T-cell (primary cell): ENCODE measurements at regions of chr2 and their contacts with region 1.

Region 1: GRCh38 chr2:113694438-113694837 is 62.0 kb downstream of the SLC35F5 start:
- DNase-seq: no peak
- ATAC-seq: no peak
- H3K4me3 ChIP-seq: no peak overlapping the region
- H3K4me3 Mint-ChIP-seq: peak overlapping the region in 1 of 3 donors; percentile 75
- H3K27ac ChIP-seq: no peak overlapping the region
- H3K27ac Mint-ChIP-seq: no peak overlapping the region
- H3K4me1 ChIP-seq: peaks cover 5 to 20% of the 10 kb centered on the region in 2 experiments
- H3K4me1 Mint-ChIP-seq: peaks cover 27 to 40% (median 30%) of the 10 kb centered on the region in 3 donors
- H3K27me3 ChIP-seq: no peaks in the 10 kb centered on the region
- H3K27me3 Mint-ChIP-seq: no peaks in the 10 kb centered on the region

Region 2: DNA sequence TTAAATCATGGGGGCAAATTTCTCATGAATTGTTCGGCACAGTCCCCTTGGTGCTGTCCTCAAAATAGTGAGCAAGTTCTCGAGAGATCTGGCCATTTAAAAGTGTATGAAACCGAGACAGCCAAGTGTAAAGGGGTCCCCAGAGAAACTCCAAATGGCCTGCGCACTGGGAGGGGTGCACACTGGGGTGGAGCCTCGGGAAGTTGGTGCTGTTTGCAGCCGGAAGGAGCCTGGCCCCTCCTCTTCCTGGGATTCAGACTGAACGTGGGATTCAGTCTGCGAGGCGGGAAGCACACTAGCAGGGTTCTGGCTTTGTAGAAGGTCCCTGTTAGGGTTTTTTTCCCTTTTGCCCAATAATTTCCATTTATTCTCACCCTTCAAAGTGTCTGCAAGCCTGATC is 18.6 kb before region 1 on chr2:
- CTCF ChIA-PET with region 1: no interaction called
- POLR2A ChIA-PET with region 1: interaction called in 1 of 2 experiments, 14 read pairs
- DNase-seq: no peak
- ATAC-seq: no peak
- H3K4me3 ChIP-seq: no peak overlapping the region
- H3K4me3 Mint-ChIP-seq: no peak overlapping the region
- H3K27ac ChIP-seq: no peak overlapping the region
- H3K27ac Mint-ChIP-seq: no peak overlapping the region
- H3K4me1 ChIP-seq: peaks cover 0 to 4% of the 10 kb centered on the region in 2 experiments
- H3K4me1 Mint-ChIP-seq: peaks cover 0 to 5% (median 0%) of the 10 kb centered on the region in 3 donors
- H3K27me3 ChIP-seq: no peaks in the 10 kb centered on the region
- H3K27me3 Mint-ChIP-seq: peaks cover 0 to 3% of the 10 kb centered on the region in 2 donors

Region 3: DNA sequence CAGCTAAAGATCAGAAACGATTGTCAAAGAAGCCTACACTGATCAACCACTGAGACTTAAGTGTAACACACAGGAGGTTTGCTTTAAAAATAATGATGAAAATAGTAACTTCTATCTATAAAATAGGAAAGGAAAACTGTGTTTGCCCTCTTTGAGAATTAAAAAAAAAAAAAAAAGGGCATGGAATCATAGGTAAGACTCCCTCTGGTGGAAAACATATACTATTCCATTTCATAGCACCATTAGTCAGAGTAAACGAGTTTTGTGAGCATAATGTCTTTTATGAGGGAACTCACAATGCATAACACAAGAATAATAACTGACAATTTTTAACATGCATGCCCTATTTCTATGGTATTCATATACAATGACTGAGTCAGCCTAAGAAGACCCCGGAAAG is 25.7 kb after region 1 on chr2:
- CTCF ChIA-PET with region 1: no interaction called
- POLR2A ChIA-PET with region 1: no interaction called
- DNase-seq: peak in 1 of 35 experiments; percentile 13
- ATAC-seq: no peak
- H3K4me3 ChIP-seq: no peak overlapping the region
- H3K4me3 Mint-ChIP-seq: no peak overlapping the region
- H3K27ac ChIP-seq: no peak overlapping the region
- H3K27ac Mint-ChIP-seq: no peak overlapping the region
- H3K4me1 ChIP-seq: no peaks in the 10 kb centered on the region
- H3K4me1 Mint-ChIP-seq: peaks cover 0 to 2% (median 0%) of the 10 kb centered on the region in 3 donors
- H3K27me3 ChIP-seq: no peaks in the 10 kb centered on the region
- H3K27me3 Mint-ChIP-seq: no peaks in the 10 kb centered on the region

Region 4: GRCh38 chr2:113757138-113757657 is 62.8 kb after region 1 on chr2:
- CTCF ChIA-PET with region 1: no interaction called
- POLR2A ChIA-PET with region 1: no interaction called
- DNase-seq: peak in 15 of 35 experiments; percentile 0 to 30 (median 4)
- ATAC-seq: peak; percentile 14 to 50 (median 20)
- H3K4me3 ChIP-seq: peak overlapping the region; percentile 78 to 92
- H3K4me3 Mint-ChIP-seq: peak overlapping the region; percentile 92 to 98 (median 96)
- H3K27ac ChIP-seq: peak overlapping the region; percentile 96
- H3K27ac Mint-ChIP-seq: peak overlapping the region; percentile 99
- H3K4me1 ChIP-seq: peaks cover 8 to 10% of the 10 kb centered on the region in 2 experiments
- H3K4me1 Mint-ChIP-seq: peaks cover 26 to 31% (median 31%) of the 10 kb centered on the region in 3 donors
- H3K27me3 ChIP-seq: no peaks in the 10 kb centered on the region
- H3K27me3 Mint-ChIP-seq: no peaks in the 10 kb centered on the region

Region 5: GRCh38 chr2:113791697-113792590 is 97.5 kb after region 1 on chr2:
- CTCF ChIA-PET with region 1: no interaction called
- POLR2A ChIA-PET with region 1: no interaction called
- DNase-seq: no peak
- ATAC-seq: no peak
- H3K4me3 ChIP-seq: no peak overlapping the region
- H3K4me3 Mint-ChIP-seq: no peak overlapping the region
- H3K27ac ChIP-seq: no peak overlapping the region
- H3K27ac Mint-ChIP-seq: no peak overlapping the region
- H3K4me1 ChIP-seq: no peaks in the 10 kb centered on the region
- H3K4me1 Mint-ChIP-seq: peaks cover 0 to 9% (median 3%) of the 10 kb centered on the region in 3 donors
- H3K27me3 ChIP-seq: peaks cover 0 to 5% of the 10 kb centered on the region in 2 experiments
- H3K27me3 Mint-ChIP-seq: peaks cover 3% of the 10 kb centered on the region in 2 donors

Region 6: GRCh38 chr2:113806217-113806930 is 111.9 kb after region 1 on chr2:
- CTCF ChIA-PET with region 1: no interaction called
- POLR2A ChIA-PET with region 1: no interaction called
- DNase-seq: no peak
- ATAC-seq: no peak
- H3K4me3 ChIP-seq: no peak overlapping the region
- H3K4me3 Mint-ChIP-seq: no peak overlapping the region
- H3K27ac ChIP-seq: no peak overlapping the region
- H3K27ac Mint-ChIP-seq: no peak overlapping the region
- H3K4me1 ChIP-seq: no peaks in the 10 kb centered on the region
- H3K4me1 Mint-ChIP-seq: no peaks in the 10 kb centered on the region
- H3K27me3 ChIP-seq: no peaks in the 10 kb centered on the region
- H3K27me3 Mint-ChIP-seq: no peaks in the 10 kb centered on the region